PC-9 (cell line): ENCODE measurements at regions of chr2 and their contacts with region 1.

Region 1: DNA sequence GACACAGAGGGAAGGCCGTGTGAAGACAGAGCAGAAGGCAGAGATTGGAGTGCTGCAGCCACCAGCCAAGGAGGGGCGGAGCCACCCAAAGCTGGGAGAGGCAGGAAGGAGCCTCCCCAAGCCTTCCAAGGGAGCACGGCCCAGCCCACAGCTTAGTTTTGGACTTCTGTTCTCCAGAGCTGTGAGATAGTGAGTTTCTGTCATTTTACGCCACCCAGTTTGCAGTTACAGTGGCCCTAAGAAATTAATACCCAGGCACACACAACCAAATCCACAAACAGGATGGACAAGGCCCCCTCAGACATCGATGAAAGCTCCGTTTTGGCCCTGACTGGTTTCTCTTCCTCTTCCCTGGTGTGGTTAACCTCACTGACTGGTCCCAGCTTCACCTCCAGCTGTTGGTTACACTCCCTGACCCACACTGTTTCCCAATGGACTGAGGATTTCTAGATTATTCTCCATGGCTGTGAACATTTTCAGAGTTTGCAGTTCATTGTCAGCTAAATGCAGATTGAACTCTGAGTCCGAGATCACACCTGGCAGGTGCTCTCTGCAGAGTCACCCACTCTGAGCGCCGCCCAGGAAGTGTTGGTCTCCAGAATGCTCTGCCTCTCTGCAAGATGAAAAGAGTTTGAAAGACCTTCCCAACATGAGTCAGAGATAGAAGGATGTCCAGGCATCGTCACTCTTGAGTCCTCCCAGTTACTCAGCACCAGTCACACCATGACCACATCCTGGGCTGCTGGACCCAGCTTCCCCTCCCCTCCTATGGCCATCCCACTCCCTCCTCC is 100.2 kb downstream of the TWIST2 start:
- DNase-seq: peak; percentile 80 to 81
- H3K4me3 ChIP-seq: no peak overlapping the region
- H3K27ac ChIP-seq: peak overlapping the region; percentile 76
- H3K4me1 ChIP-seq: peaks cover 24% of the 10 kb centered on the region
- H3K27me3 ChIP-seq: 0 out of 2 replicates have a peak, but pooled peaks cover 3% of the 10 kb centered on the region
- CTCF ChIP-seq: no peak

Region 2: DNA sequence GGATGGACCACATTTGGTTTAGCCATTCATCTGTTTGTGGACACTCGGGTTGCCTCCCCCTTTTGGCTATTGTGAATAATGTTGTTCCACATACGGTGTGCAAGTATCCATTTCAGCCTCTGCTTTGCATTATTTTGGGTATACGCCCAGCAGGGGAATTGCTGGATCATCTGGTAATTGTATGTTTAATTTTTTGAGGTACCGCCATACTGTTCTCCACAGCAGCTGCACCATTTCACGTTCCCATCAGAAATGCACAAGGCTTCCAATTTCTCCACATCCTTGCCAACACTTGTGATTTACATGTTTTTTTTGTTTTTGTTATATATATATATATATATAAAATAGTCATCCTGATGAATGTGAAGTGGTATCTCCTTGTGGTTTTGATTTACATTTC is 154.8 kb before region 1 on chr2:
- CTCF ChIA-PET with region 1: no interaction called
- POLR2A ChIA-PET with region 1: no interaction called
- intact Hi-C with region 1: no loop called
- DNase-seq: no peak
- H3K4me3 ChIP-seq: no peak overlapping the region
- H3K27ac ChIP-seq: no peak overlapping the region
- H3K4me1 ChIP-seq: no peaks in the 10 kb centered on the region
- H3K27me3 ChIP-seq: peaks cover 82% of the 10 kb centered on the region
- CTCF ChIP-seq: no peak

Region 3: GRCh38 chr2:238965371-238966071 is 17.4 kb after region 1 on chr2:
- CTCF ChIA-PET with region 1: no interaction called
- POLR2A ChIA-PET with region 1: no interaction called
- intact Hi-C with region 1: loop called (anchors 1 kb)
- DNase-seq: no peak
- H3K4me3 ChIP-seq: no peak overlapping the region
- H3K27ac ChIP-seq: no peak overlapping the region
- H3K4me1 ChIP-seq: no peaks in the 10 kb centered on the region
- H3K27me3 ChIP-seq: peaks cover 80% of the 10 kb centered on the region
- CTCF ChIP-seq: no peak